ENCODE measurements at regions of chr1 and their contacts with region 1.

Region 1: DNA sequence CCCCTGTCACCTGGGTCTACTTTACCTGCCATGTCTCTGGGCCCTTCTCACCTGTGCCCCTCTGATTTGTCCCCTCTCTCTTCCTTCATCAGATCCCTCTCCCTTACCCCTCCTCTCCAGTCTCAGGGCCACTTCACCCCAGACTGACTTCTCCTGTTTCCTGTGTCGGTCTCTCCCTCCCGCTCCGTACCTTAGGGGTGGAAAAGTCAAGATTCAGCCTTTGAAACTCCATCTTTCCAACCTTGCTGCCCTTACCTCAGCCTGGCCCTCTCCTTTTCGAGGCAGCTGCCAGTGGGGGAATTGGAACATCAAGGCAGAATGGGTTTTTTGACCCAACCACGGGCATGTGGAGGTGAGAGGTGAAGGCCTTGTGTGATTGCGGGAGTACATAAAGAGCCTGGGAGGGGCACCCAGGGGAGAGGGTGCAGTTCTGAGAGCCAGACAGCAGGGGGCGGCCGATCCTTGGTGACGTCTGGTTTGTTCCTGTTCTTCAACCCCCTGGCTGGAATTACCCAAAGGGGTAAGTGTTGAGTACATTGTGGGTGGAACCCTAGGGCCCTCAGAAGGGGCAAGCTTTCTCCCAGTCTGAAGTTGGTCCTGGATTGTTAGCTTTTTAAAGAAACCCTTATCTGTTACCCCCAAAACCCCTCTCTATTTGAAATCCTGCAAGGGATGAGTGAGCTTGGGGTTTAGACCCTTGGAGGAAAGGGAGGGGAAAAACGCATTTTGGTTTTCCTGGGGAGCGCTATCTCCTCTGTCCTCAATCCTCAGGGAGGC is 12.3 kb upstream of the DMBX1 start:
- DNase-seq: peak; percentile 88
- H3K4me3 Mint-ChIP-seq: no peak overlapping the region
- H3K27ac Mint-ChIP-seq: no peak overlapping the region
- H3K4me1 Mint-ChIP-seq: no peaks in the 10 kb centered on the region
- H3K27me3 Mint-ChIP-seq: peaks cover 24% of the 10 kb centered on the region

Region 2: GRCh38 chr1:46406881-46407608 is 70.3 kb before region 1 on chr1:
- CTCF ChIA-PET with region 1: no interaction called
- intact Hi-C with region 1: loop called (anchors 2 kb)
- DNase-seq: no peak
- H3K4me3 Mint-ChIP-seq: no peak overlapping the region
- H3K27ac Mint-ChIP-seq: no peak overlapping the region
- H3K4me1 Mint-ChIP-seq: no peaks in the 10 kb centered on the region
- H3K27me3 Mint-ChIP-seq: no peaks in the 10 kb centered on the region

Region 3: GRCh38 chr1:46442317-46443161 is 34.8 kb before region 1 on chr1:
- CTCF ChIA-PET with region 1: interaction called, 5 read pairs
- intact Hi-C with region 1: loop called (anchors 1 kb)
- DNase-seq: peak; percentile 85
- H3K4me3 Mint-ChIP-seq: peak overlapping the region; percentile 84
- H3K27ac Mint-ChIP-seq: peak overlapping the region; percentile 65
- H3K4me1 Mint-ChIP-seq: peaks cover 18% of the 10 kb centered on the region
- H3K27me3 Mint-ChIP-seq: peaks cover 12% of the 10 kb centered on the region

Region 4: GRCh38 chr1:46522184-46522968 is 45.0 kb after region 1 on chr1:
- CTCF ChIA-PET with region 1: interaction called, 98 read pairs
- intact Hi-C with region 1: loop called (anchors 1 kb)
- DNase-seq: peak; percentile 59
- H3K4me3 Mint-ChIP-seq: no peak overlapping the region
- H3K27ac Mint-ChIP-seq: no peak overlapping the region
- H3K4me1 Mint-ChIP-seq: peaks cover 11% of the 10 kb centered on the region
- H3K27me3 Mint-ChIP-seq: peaks cover 28% of the 10 kb centered on the region

Region 5: DNA sequence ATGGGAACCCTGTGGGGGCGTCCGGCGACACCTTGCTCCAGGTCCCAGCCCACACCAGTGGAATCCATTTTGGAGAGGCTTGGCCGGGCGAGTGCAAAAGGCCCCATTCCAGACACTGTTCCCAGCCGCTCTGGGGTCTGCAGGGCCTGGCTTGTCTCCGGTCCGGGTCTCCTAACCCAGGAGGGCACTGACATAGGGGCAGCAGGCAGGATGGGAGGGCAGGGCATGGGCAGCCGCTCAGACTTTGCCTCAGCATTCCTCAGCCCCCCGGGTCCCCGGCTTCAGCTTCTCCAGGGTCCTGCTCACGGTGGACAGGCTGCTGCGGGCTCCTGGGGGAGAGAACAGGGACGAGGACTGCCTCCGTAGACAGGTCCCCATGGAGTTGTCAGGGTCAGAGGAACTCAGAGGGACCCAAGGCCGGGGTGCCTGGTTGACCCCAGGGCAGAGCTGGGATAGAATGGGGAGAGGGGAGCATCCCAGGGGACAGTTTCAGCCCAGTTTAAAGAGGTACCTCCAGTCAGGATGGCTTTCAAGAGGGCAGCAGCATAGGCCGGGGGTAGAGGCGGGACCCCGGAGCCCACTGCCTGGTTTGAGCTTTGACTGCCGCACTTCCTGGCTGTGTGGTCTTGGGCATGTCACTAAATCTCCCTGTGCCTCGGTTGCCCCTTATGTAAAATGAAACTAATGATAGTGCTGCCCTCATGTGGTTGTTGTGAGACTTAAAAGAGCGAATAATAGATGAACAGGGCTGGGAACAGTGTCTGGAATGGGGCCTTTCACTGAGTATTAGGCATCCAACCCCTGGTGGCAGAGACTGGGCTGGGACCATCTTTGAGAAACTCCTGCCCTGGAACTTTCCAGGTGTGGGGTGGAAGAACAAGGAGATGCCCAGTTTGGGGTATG is 70.4 kb after region 1 on chr1:
- CTCF ChIA-PET with region 1: interaction called, 3 read pairs
- intact Hi-C with region 1: loop called (anchors 1 kb)
- DNase-seq: peak; percentile 18
- H3K4me3 Mint-ChIP-seq: no peak overlapping the region
- H3K27ac Mint-ChIP-seq: no peak overlapping the region
- H3K4me1 Mint-ChIP-seq: no peaks in the 10 kb centered on the region
- H3K27me3 Mint-ChIP-seq: peaks cover 41% of the 10 kb centered on the region

Region 6: DNA sequence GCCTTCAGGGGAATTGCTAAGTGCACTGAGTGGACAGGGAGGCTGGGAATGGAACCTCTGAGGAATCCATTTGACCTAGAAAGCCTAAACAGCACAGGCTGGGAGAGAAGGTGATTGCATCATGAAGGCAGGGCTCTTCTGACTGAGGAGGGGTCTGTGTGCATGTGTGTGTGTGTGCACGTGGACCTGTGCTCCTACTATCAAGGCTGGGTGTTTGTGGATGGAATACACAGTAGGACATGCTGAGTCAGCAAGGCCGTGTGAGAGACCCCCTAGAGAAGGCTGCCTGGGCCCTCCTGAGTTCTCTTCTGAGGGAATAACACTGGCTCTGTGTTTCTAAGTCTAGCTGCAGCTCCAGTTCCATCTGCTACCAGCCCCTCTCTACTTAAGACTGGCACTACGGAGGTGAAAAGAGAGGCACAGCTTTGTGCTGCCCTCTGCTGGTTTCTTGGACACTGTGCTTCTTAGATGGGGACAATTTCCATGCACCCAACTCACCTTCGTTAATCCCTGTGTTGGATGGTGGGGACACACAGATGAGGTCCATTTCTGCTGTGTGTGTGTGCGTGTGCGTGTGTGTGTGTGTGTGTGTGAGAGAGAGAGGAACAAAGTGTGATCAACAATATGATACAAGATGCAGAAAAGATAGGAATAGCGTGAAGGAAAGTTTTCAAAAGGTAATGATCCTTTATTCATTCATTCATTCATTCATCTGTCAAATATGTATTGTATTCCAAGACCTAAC is 247.8 kb after region 1 on chr1:
- CTCF ChIA-PET with region 1: no interaction called
- intact Hi-C with region 1: loop called (anchors 1 kb)
- DNase-seq: peak; percentile 83
- H3K4me3 Mint-ChIP-seq: no peak overlapping the region
- H3K27ac Mint-ChIP-seq: no peak overlapping the region
- H3K4me1 Mint-ChIP-seq: no peaks in the 10 kb centered on the region
- H3K27me3 Mint-ChIP-seq: peaks cover 23% of the 10 kb centered on the region

Measured in activated naive CD4-positive, alpha-beta T cell treated with anti-CD3 and anti-CD28 coated beads for 36 hours (primary cell).